Gastrocnemius medialis (tissue), 4 donors: ENCODE measurements at regions of chr10 and their contacts with region 1.

Region 1: GRCh38 chr10:24209946-24210491 is 1.1 kb downstream of the KIAA1217 start:
- DNase-seq: peak in 1 of 2 donors; percentile 37
- ATAC-seq: peak in 1 of 2 donors; percentile 10
- H3K4me3 ChIP-seq: peak overlapping the region; percentile 62 to 86 (median 69)
- H3K27ac ChIP-seq: peak overlapping the region; percentile 92 to 96 (median 94)
- H3K4me1 ChIP-seq: peaks cover 73% of the 10 kb centered on the region in 2 donors
- H3K27me3 ChIP-seq: no peaks in the 10 kb centered on the region
- CTCF ChIP-seq: no peak
- POLR2A ChIP-seq: no peak

Region 2: DNA sequence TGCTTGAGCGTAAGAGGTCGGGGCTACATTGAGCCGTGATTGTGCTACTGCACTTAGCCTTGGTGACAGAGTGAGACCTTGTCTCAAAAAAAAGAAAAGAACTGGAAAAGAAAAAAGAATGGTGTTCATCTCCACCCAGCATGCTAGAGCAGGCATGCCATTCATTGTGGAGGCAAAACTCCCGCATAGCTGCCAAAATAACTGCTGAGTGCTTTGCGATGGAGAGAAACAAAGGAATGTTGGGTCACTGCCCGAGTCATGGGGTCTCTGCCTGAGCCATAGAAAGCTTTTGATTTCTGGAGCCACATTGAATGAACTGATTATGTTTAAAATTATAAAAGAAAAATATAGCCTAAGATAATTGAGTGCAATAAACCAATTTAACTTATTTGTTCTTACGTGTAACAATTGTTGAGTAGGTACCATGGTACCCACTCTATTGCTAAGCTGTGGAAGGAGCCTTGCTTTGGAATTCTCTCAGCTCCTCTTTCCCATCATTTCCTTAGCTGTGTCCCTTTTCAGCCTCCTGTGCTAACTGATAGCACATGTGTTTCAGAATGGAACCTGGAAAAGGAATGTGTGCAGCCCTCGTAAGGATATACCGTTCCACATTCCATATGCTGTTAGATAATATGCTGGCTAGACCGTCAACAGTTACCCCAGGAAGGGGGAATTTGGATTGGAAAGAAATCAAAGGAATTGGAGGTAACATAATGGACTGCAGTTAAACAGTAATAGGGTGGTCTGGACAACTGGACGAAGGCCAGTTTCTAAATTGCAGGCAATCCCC is 97.9 kb after region 1 on chr10:
- in situ Hi-C with region 1: no loop called
- intact Hi-C with region 1: loop called (anchors 5 kb)
- DNase-seq: no peak
- ATAC-seq: no peak
- H3K4me3 ChIP-seq: no peak overlapping the region
- H3K27ac ChIP-seq: peak overlapping the region; percentile 88 to 96 (median 95)
- H3K4me1 ChIP-seq: peaks cover 74 to 77% of the 10 kb centered on the region in 2 donors
- H3K27me3 ChIP-seq: no peaks in the 10 kb centered on the region
- CTCF ChIP-seq: no peak
- POLR2A ChIP-seq: no peak

Region 3: GRCh38 chr10:24465891-24466818 is 256.1 kb after region 1 on chr10:
- in situ Hi-C with region 1: no loop called
- intact Hi-C with region 1: loop called (anchors 5 kb)
- DNase-seq: peak; percentile 45 to 53
- ATAC-seq: peak; percentile 53 to 70
- H3K4me3 ChIP-seq: peak overlapping the region; percentile 7 to 53 (median 34)
- H3K27ac ChIP-seq: peak overlapping the region; percentile 69 to 87 (median 83)
- H3K4me1 ChIP-seq: peaks cover 88% of the 10 kb centered on the region in 2 donors
- H3K27me3 ChIP-seq: no peaks in the 10 kb centered on the region
- CTCF ChIP-seq: no peak
- POLR2A ChIP-seq: peak; percentile 20 to 75

Region 4: GRCh38 chr10:24518981-24519597 is 309.1 kb after region 1 on chr10:
- in situ Hi-C with region 1: loop called in 3 of 4 experiments (anchors 10 to 25 kb)
- intact Hi-C with region 1: loop called (anchors 5 kb)
- DNase-seq: peak; percentile 38 to 62
- ATAC-seq: peak; percentile 55 to 78
- H3K4me3 ChIP-seq: no peak overlapping the region
- H3K27ac ChIP-seq: peak overlapping the region; percentile 50 to 71 (median 66)
- H3K4me1 ChIP-seq: peaks cover 11 to 12% of the 10 kb centered on the region in 2 donors
- H3K27me3 ChIP-seq: no peaks in the 10 kb centered on the region
- CTCF ChIP-seq: peak; percentile 63 to 81 (median 78)
- POLR2A ChIP-seq: no peak